Left lung (tissue), 14 donors: ENCODE measurements at regions of chr4 and their contacts with region 1.

Region 1: GRCh38 chr4:1628892-1629698 is 55.0 kb downstream of the FAM53A start:
- DNase-seq: peak; percentile 42 to 92 (median 63)
- ATAC-seq: peak; percentile 94
- H3K4me3 ChIP-seq: no peak overlapping the region
- H3K27ac ChIP-seq: no peak overlapping the region
- H3K4me1 ChIP-seq: no peaks in the 10 kb centered on the region
- H3K27me3 ChIP-seq: peaks cover 0 to 5% of the 10 kb centered on the region in 2 donors
- CTCF ChIP-seq: peak; percentile 98 to 99

Region 2: GRCh38 chr4:1365271-1366178 is 263.6 kb before region 1 on chr4:
- intact Hi-C with region 1: loop called in 1 of 2 experiments (anchors 10 kb)
- DNase-seq: peak in 3 of 4 donors; percentile 34 to 77 (median 57)
- ATAC-seq: peak; percentile 79
- H3K4me3 ChIP-seq: no peak overlapping the region
- H3K27ac ChIP-seq: no peak overlapping the region
- H3K4me1 ChIP-seq: peaks cover 0 to 5% of the 10 kb centered on the region in 2 donors
- H3K27me3 ChIP-seq: no peaks in the 10 kb centered on the region
- CTCF ChIP-seq: no peak